Psoas muscle (tissue), 8 donors: ENCODE measurements at regions of chr1 and their contacts with region 1.

Region 1: DNA sequence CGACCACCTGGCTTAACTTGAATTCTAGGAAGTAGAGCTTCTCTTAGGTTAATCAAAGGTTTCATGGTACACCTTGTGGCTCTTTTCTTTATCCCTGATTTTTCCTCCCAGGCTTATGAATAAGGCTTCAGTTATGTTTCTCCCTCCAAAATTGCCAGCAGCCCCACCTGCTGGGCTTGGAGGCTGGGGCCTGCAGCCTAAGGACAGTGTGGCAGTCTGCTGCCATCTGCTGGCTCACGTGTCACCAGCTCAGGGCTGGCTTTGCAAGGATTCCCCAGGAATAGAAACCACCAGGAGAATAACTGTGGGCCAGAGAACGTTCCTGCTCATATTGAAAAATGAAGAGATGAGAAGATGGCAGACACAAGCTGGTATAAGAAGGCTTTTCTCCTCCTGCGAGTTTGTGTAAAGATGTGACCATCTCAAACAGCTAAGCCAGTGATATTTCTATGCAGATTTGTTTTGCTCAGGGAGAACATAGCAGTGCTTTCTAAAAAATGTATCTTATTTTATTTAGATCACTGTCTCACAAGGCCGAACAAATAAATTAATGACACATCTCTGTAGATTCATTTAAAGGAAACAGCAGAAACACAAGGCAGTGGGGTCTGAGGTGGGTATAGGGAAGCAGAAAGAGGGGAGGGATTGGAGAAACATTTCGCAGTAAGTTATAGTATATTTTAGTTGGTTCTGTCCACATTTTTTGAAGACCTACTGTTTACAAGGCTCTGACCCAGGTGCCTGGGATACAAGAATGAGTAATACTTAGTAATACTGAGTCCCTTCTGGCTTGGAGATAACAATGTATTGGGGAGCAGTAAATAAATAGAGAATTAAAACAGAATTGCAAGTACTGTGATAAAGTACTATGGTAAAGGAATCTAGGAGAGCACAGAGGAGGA is 291.1 kb upstream of the SGIP1 start:
- DNase-seq: peak; percentile 85 to 89
- ATAC-seq: peak; percentile 96 to 99 (median 99)
- H3K4me3 ChIP-seq: no peak overlapping the region
- H3K27ac ChIP-seq: no peak overlapping the region
- H3K4me1 ChIP-seq: no peaks in the 10 kb centered on the region
- H3K27me3 ChIP-seq: no peaks in the 10 kb centered on the region
- CTCF ChIP-seq: peak; percentile 99

Region 2: GRCh38 chr1:65894738-65895605 is 347.9 kb before region 1 on chr1:
- intact Hi-C with region 1: no loop called
- DNase-seq: no peak
- ATAC-seq: no peak
- H3K4me3 ChIP-seq: no peak overlapping the region
- H3K27ac ChIP-seq: no peak overlapping the region
- H3K4me1 ChIP-seq: no peaks in the 10 kb centered on the region
- H3K27me3 ChIP-seq: no peaks in the 10 kb centered on the region
- CTCF ChIP-seq: no peak

Region 3: DNA sequence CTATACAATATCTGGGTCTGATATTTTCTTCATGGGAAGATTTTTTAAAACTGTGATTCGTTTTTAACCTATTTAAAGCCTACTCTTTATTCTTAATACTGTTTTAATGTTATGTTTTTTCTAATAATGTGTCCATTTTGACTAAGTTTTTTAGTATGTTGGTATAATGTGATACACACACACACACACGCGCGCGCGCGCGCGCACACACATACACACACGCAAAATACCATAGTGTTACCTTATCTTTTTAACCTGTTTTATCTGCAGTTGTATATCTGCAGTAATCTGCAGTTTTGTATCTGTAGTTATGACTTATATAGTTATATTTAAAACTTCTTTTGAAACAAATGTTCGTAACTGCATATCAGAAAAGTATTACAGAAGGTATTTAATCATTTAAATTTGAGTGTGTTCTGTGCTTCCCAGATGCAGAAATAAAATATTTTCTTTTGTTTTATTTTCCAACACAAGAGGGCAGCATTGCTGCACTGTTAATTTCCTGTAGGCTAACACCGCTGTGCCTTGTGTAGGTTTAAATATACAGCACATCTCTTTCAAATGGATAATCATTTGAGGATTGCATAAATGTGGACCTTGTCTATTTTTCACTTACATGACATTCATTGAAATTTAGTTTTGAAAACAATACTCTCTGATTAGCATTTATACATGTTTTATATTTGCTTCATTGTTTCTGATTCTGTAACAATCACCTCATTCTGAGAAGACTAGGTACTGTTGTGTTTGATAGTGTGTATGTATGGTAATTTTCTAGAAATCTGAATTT is 284.1 kb before region 1 on chr1:
- intact Hi-C with region 1: loop called (anchors 1 to 2 kb)
- DNase-seq: peak in 1 of 2 donors; percentile 34
- ATAC-seq: peak in 3 of 4 donors; percentile 52 to 70 (median 55)
- H3K4me3 ChIP-seq: no peak overlapping the region
- H3K27ac ChIP-seq: no peak overlapping the region
- H3K4me1 ChIP-seq: no peaks in the 10 kb centered on the region
- H3K27me3 ChIP-seq: no peaks in the 10 kb centered on the region
- CTCF ChIP-seq: peak; percentile 84

Region 4: GRCh38 chr1:66168948-66169671 is 73.8 kb before region 1 on chr1:
- intact Hi-C with region 1: loop called in 1 of 2 experiments (anchors 2 kb)
- DNase-seq: no peak
- ATAC-seq: peak in 3 of 4 donors; percentile 49 to 54 (median 51)
- H3K4me3 ChIP-seq: no peak overlapping the region
- H3K27ac ChIP-seq: peak overlapping the region; percentile 3
- H3K4me1 ChIP-seq: no peaks in the 10 kb centered on the region
- H3K27me3 ChIP-seq: no peaks in the 10 kb centered on the region
- CTCF ChIP-seq: no peak

Region 5: GRCh38 chr1:66197785-66198184 is 45.1 kb before region 1 on chr1:
- intact Hi-C with region 1: no loop called
- DNase-seq: no peak
- ATAC-seq: no peak
- H3K4me3 ChIP-seq: no peak overlapping the region
- H3K27ac ChIP-seq: no peak overlapping the region
- H3K4me1 ChIP-seq: no peaks in the 10 kb centered on the region
- H3K27me3 ChIP-seq: no peaks in the 10 kb centered on the region
- CTCF ChIP-seq: no peak

Region 6: DNA sequence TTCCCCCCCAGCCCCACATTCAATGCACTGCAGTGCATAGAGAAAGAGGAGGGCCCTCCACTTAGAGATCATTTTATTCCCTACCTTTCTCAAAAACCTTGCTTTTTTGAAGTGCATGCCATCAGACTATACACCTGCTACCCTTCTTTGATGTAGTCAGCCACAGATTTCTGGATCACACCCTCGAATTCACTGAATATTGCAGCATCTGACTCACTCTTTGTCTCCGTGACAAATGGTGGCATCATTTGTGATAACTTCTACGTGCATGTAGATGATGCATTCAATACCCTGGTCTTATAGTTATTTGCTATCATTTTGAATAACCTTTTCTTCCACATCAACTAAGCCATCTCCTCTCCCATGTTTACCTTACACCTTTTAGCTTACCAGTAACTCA is 19.2 kb before region 1 on chr1:
- intact Hi-C with region 1: no loop called
- DNase-seq: no peak
- ATAC-seq: no peak
- H3K4me3 ChIP-seq: no peak overlapping the region
- H3K27ac ChIP-seq: no peak overlapping the region
- H3K4me1 ChIP-seq: no peaks in the 10 kb centered on the region
- H3K27me3 ChIP-seq: no peaks in the 10 kb centered on the region
- CTCF ChIP-seq: no peak

Region 7: DNA sequence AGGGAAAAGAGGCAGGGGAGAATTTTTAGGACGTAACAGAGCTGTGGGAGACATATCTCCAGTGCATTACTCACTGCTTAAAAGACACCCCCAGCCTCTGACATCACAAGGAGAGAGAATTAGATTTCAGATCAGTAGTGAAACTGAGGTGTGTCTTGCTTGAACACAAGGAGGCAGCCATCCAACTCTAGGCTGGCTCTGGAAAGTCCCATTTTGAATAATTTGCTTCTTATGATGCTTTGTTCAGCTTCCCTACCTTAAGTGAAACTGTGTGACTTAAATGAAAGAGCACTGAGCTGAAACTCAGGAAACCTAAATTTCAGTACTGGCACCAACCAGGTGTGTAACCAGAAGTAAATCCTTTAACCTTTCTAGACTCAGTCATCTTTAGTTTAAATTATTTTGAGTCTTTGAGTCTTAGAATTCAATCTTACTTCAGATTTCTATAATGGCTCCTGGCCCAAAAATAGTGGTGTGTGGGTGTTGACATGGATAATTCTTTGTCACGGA is 39.5 kb after region 1 on chr1:
- intact Hi-C with region 1: no loop called
- DNase-seq: no peak
- ATAC-seq: peak in 3 of 4 donors; percentile 37 to 45 (median 45)
- H3K4me3 ChIP-seq: no peak overlapping the region
- H3K27ac ChIP-seq: peak overlapping the region; percentile 15
- H3K4me1 ChIP-seq: peaks cover 24% of the 10 kb centered on the region
- H3K27me3 ChIP-seq: no peaks in the 10 kb centered on the region
- CTCF ChIP-seq: no peak

Region 8: DNA sequence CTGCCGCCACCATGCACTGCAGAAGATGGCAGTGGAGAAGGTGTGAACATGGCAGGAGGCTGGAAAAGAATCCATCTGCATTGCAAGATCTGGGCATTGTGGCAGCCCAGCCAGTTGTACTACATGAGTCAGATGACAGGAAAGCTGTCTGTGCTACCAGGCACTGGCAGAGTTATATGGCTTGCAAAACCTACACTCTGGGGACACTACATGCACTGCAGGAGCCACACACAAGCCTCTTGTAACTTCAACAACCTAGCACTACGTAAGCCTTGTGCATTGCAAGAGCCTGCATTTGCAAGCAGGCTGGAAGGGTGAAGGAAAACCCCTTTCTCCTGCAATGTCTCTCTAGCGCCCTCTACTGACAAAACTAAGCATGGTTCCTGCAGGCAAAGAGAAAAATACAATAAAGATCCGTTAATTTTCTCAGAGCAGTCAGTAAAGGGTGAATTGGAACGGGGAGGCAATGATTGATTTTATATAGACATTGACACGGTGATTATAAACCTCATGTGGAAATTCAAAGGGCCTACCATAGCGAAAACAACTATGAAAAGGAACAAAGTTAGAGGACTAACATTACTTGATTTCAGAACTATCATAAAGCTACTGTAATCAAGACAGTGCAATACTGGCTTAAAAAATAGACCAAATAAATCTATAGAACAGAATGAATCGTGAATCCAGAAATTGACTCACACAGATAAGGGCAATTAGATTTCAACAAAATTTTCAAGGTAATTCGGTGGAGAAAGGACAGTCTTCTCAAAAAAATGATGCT is 483.2 kb after region 1 on chr1:
- intact Hi-C with region 1: loop called in 1 of 2 experiments (anchors 10 kb)
- DNase-seq: peak; percentile 12 to 52
- ATAC-seq: peak in 3 of 4 donors; percentile 42 to 68 (median 55)
- H3K4me3 ChIP-seq: no peak overlapping the region
- H3K27ac ChIP-seq: no peak overlapping the region
- H3K4me1 ChIP-seq: no peaks in the 10 kb centered on the region
- H3K27me3 ChIP-seq: no peaks in the 10 kb centered on the region
- CTCF ChIP-seq: peak; percentile 75